Esophagus squamous epithelium (tissue), 5 donors: ENCODE measurements at regions of chr2 and their contacts with region 1.

Region 1: DNA sequence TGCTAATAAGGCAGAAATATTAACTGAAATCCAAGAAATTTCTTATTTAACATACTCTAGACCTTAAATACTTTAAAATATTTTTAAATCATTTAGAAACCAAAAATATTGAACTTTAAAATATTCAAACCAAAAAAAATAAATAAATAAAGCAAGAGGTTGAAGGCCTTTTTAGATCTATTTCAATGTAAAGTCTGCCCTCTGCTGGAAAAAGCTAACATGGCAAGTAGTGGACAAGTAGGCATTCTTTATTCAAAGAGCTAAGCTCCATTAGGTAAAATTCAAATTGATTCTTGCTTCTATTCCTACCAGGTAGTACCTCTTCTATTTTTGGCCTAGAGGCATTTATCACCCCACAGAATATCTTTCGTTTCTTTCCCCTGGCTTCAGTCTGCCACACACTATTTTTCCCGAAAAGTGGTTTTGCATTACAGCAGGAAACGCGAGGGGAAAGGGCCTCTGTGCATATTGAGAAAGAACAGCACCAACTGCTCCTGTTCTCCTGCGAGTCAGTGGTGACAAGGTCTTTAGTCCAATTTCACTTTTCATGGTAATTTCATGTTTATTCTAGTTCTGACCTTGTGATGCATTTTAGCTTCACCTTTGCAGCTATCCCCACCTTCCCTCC is 20.4 kb downstream of the IFIH1 start:
- DNase-seq: no peak
- H3K4me3 ChIP-seq: no peak overlapping the region
- H3K27ac ChIP-seq: no peak overlapping the region
- H3K4me1 ChIP-seq: peaks cover 0 to 4% (median 0%) of the 10 kb centered on the region in 3 donors
- H3K27me3 ChIP-seq: no peaks in the 10 kb centered on the region
- CTCF ChIP-seq: peak; percentile 63 to 87 (median 85)
- POLR2A ChIP-seq: no peak

Region 2: DNA sequence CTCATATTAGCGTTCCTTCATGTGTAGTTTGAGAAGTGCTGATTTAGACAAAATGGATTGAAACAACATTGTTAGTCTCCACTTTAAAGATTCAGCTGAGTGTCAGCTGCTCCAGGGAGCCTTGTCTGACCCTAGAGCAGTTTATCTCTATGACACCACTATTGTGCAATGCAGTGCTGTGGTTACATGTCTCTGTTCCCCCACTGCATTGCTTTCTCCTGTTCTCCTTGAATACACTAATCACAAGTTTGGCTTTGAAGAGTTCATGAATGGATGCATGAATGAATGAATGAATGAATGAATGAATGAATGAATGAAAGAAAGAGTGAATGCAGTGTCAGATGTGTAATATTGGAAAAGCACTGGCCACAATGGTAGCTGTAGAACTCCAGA is 184.3 kb before region 1 on chr2:
- intact Hi-C with region 1: no loop called
- DNase-seq: no peak
- H3K4me3 ChIP-seq: no peak overlapping the region
- H3K27ac ChIP-seq: peak overlapping the region in 1 of 4 donors; percentile 39
- H3K4me1 ChIP-seq: peaks cover 5 to 34% (median 33%) of the 10 kb centered on the region in 3 donors
- H3K27me3 ChIP-seq: no peaks in the 10 kb centered on the region
- CTCF ChIP-seq: no peak
- POLR2A ChIP-seq: no peak

Region 3: GRCh38 chr2:162221064-162221463 is 77.0 kb before region 1 on chr2:
- intact Hi-C with region 1: loop called (anchors 5 kb)
- DNase-seq: no peak
- H3K4me3 ChIP-seq: no peak overlapping the region
- H3K27ac ChIP-seq: no peak overlapping the region
- H3K4me1 ChIP-seq: no peaks in the 10 kb centered on the region
- H3K27me3 ChIP-seq: no peaks in the 10 kb centered on the region
- CTCF ChIP-seq: peak; percentile 65 to 86 (median 76)
- POLR2A ChIP-seq: no peak